Pancreas (tissue), 10 donors: ENCODE measurements at regions of chr5 and their contacts with region 1.

Region 1: GRCh38 chr5:147935032-147935431 is 28.7 kb upstream of the C5orf46 start:
- DNase-seq: peak in 2 of 6 donors; percentile 7 to 36
- ATAC-seq: peak; percentile 79 to 98 (median 95)
- H3K4me3 ChIP-seq: no peak overlapping the region
- H3K27ac ChIP-seq: no peak overlapping the region
- H3K4me1 ChIP-seq: no peaks in the 10 kb centered on the region
- H3K27me3 ChIP-seq: no peaks in the 10 kb centered on the region
- CTCF ChIP-seq: peak in 3 of 4 donors; percentile 15 to 32 (median 32)

Region 2: GRCh38 chr5:147887024-147887627 is 47.9 kb before region 1 on chr5:
- intact Hi-C with region 1: loop called in 1 of 3 experiments (anchors 5 kb)
- DNase-seq: peak in 2 of 6 donors; percentile 10 to 41
- ATAC-seq: peak; percentile 66 to 87 (median 78)
- H3K4me3 ChIP-seq: no peak overlapping the region
- H3K27ac ChIP-seq: no peak overlapping the region
- H3K4me1 ChIP-seq: no peaks in the 10 kb centered on the region
- H3K27me3 ChIP-seq: no peaks in the 10 kb centered on the region
- CTCF ChIP-seq: peak in 3 of 4 donors; percentile 30 to 54 (median 42)

Region 3: GRCh38 chr5:148042881-148043280 is 107.8 kb after region 1 on chr5:
- intact Hi-C with region 1: no loop called
- DNase-seq: no peak
- ATAC-seq: no peak
- H3K4me3 ChIP-seq: no peak overlapping the region
- H3K27ac ChIP-seq: no peak overlapping the region
- H3K4me1 ChIP-seq: no peaks in the 10 kb centered on the region
- H3K27me3 ChIP-seq: no peaks in the 10 kb centered on the region
- CTCF ChIP-seq: no peak

Region 4: GRCh38 chr5:148085934-148086705 is 151.1 kb after region 1 on chr5:
- intact Hi-C with region 1: no loop called
- DNase-seq: no peak
- ATAC-seq: no peak
- H3K4me3 ChIP-seq: no peak overlapping the region
- H3K27ac ChIP-seq: no peak overlapping the region
- H3K4me1 ChIP-seq: peaks cover 0 to 11% (median 6%) of the 10 kb centered on the region in 3 donors
- H3K27me3 ChIP-seq: no peaks in the 10 kb centered on the region
- CTCF ChIP-seq: no peak

Region 5: GRCh38 chr5:148384380-148384737 is 449.3 kb after region 1 on chr5:
- intact Hi-C with region 1: no loop called
- DNase-seq: no peak
- ATAC-seq: peak in 2 of 4 donors; percentile 6 to 24
- H3K4me3 ChIP-seq: peak overlapping the region; percentile 64 to 96 (median 72)
- H3K27ac ChIP-seq: peak overlapping the region; percentile 69 to 89 (median 76)
- H3K4me1 ChIP-seq: peaks cover 17 to 25% (median 17%) of the 10 kb centered on the region in 3 donors
- H3K27me3 ChIP-seq: no peaks in the 10 kb centered on the region
- CTCF ChIP-seq: no peak

Region 6: GRCh38 chr5:148469501-148469935 is 534.5 kb after region 1 on chr5:
- intact Hi-C with region 1: no loop called
- DNase-seq: peak in 2 of 6 donors; percentile 10 to 25
- ATAC-seq: peak; percentile 9 to 66 (median 53)
- H3K4me3 ChIP-seq: no peak overlapping the region
- H3K27ac ChIP-seq: peak overlapping the region in 1 of 4 donors; percentile 10
- H3K4me1 ChIP-seq: no peaks in the 10 kb centered on the region
- H3K27me3 ChIP-seq: no peaks in the 10 kb centered on the region
- CTCF ChIP-seq: no peak